A549 (cell line): ENCODE measurements at regions of chr15 and their contacts with region 1.

Region 1: GRCh38 chr15:51776952-51777574 is 25.7 kb downstream of the TMOD2 start:
- DNase-seq: peak; percentile 88
- ATAC-seq: peak; percentile 93 to 97
- H3K4me3 ChIP-seq: no peak overlapping the region
- H3K27ac ChIP-seq: no peak overlapping the region
- H3K4me1 ChIP-seq: peaks cover 13% of the 10 kb centered on the region; the same call in 2 of the 3 replicates
- CTCF ChIP-seq: peak; percentile 92
- EP300 ChIP-seq: no peak
- POLR2A ChIP-seq: no peak
- RAD21 ChIP-seq: peak; percentile 70 to 78

Region 2: GRCh38 chr15:51524376-51524775 is 252.7 kb before region 1 on chr15:
- CTCF ChIA-PET with region 1: interaction called, 11 read pairs
- POLR2A ChIA-PET with region 1: no interaction called
- DNase-seq: no peak
- ATAC-seq: no peak
- H3K4me3 ChIP-seq: no peak overlapping the region
- H3K27ac ChIP-seq: no peak overlapping the region
- H3K4me1 ChIP-seq: no peaks in the 10 kb centered on the region
- CTCF ChIP-seq: no peak
- EP300 ChIP-seq: no peak
- POLR2A ChIP-seq: no peak
- RAD21 ChIP-seq: no peak

Region 3: DNA sequence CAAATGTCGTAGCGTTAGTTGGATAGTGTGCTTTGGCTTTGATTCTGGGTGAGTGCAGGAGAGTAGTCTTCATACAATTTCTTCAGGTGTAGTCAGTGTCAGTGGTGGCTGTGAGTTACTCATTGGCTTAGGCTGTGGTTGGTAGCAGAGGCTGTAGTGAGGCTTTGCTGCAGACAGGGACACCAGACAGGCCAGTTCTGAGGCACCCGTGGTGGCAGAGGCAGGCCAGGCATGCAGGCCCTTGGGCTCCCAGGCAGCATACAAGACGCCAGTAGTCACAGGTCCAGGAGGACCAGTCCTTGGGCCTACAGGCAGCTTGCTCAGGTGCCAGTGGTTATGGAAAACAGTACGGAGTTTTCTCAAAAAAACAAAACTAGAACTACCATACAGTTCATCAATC is 215.8 kb before region 1 on chr15:
- CTCF ChIA-PET with region 1: no interaction called
- POLR2A ChIA-PET with region 1: no interaction called
- DNase-seq: no peak
- ATAC-seq: peak; percentile 48 to 64; a peak in 3 of 6 replicates
- H3K4me3 ChIP-seq: no peak overlapping the region
- H3K27ac ChIP-seq: no peak overlapping the region
- H3K4me1 ChIP-seq: no peaks in the 10 kb centered on the region
- CTCF ChIP-seq: no peak
- EP300 ChIP-seq: no peak
- POLR2A ChIP-seq: 0 out of 2 replicates have a peak, but pooled peaks have one; percentile 14
- RAD21 ChIP-seq: no peak

Region 4: DNA sequence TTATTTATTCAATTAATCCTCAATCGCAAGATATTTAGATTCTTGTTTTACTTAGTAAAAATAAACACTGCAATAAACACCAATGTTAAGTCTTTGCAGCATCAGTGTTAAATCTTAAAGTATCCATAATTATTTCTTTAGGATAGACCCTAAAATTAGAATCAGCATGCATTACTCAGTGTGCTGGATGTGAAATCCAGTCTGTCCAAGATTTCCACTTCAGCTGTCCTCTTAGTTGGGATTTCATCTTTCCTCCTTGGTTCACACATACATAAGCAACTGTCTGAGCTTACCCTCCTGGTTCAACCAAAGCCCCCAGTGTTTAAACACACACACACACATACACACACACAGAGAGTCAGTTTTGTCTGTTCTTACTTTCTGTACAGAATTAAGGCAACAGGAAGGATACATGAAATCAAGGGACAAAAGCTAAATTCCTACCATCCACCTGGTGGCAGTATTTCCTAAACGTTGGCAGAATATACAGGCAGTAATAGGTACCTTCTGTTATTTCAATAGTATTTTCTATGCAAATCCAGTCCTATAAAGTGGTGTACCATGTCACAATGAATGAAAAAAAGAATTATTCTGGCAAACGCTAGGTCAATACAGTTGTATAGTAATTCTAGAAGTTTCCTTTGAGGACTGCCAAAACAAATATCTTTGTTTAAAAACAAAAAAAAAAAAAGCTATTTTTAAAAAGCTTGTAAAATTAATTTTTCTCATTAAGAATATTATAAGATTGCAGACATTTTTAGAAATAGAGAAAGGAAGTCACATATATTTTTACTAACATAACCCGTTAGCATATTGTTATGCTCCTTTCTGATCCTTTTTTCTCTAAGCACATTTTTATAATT is 127.2 kb before region 1 on chr15:
- CTCF ChIA-PET with region 1: interaction called, 597 read pairs
- POLR2A ChIA-PET with region 1: interaction called, 15 read pairs
- DNase-seq: peak; percentile 75 to 85
- ATAC-seq: peak; percentile 96 to 99
- H3K4me3 ChIP-seq: no peak overlapping the region
- H3K27ac ChIP-seq: no peak overlapping the region
- H3K4me1 ChIP-seq: no peaks in the 10 kb centered on the region
- CTCF ChIP-seq: peak; percentile 98
- EP300 ChIP-seq: no peak
- POLR2A ChIP-seq: no peak
- RAD21 ChIP-seq: peak; percentile 97 to 99

Region 5: DNA sequence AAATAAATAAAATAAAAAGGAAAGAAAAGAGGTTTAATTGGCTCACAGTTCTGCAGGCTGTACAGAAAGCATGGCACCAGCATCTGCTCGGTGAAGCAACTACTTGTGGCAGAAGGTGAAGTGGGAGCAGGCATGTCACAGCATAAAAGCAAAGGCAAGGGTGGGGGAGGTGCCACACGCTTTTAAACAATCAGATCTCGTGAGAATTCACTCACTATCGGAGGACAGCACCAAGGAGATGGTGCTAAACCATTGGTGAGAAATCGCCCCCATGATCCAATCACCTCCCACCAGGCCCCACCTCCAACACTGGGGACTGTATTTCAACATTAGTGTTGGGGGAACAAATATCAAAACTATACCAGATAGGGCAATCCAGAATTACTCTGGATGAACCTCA is 80.5 kb before region 1 on chr15:
- CTCF ChIA-PET with region 1: interaction called, 21 read pairs
- POLR2A ChIA-PET with region 1: no interaction called
- DNase-seq: no peak
- ATAC-seq: no peak
- H3K4me3 ChIP-seq: no peak overlapping the region
- H3K27ac ChIP-seq: no peak overlapping the region
- H3K4me1 ChIP-seq: no peaks in the 10 kb centered on the region
- CTCF ChIP-seq: no peak
- EP300 ChIP-seq: no peak
- POLR2A ChIP-seq: no peak
- RAD21 ChIP-seq: no peak

Region 6: GRCh38 chr15:51793521-51794305 is 16.6 kb after region 1 on chr15:
- CTCF ChIA-PET with region 1: interaction called, 37 read pairs
- POLR2A ChIA-PET with region 1: no interaction called
- DNase-seq: no peak
- ATAC-seq: no peak
- H3K4me3 ChIP-seq: no peak overlapping the region
- H3K27ac ChIP-seq: 0 out of 6 replicates have a peak overlapping the region, but pooled peaks of 1 of the 2 experiments have one; percentile 5
- H3K4me1 ChIP-seq: peaks cover 36% of the 10 kb centered on the region
- CTCF ChIP-seq: no peak
- EP300 ChIP-seq: no peak
- POLR2A ChIP-seq: no peak
- RAD21 ChIP-seq: no peak

Region 7: GRCh38 chr15:51853998-51854397 is 76.9 kb after region 1 on chr15:
- CTCF ChIA-PET with region 1: interaction called, 12 read pairs
- POLR2A ChIA-PET with region 1: no interaction called
- DNase-seq: no peak
- ATAC-seq: peak in 1 of 2 experiments; percentile 17; a peak in 2 of 6 replicates
- H3K4me3 ChIP-seq: no peak overlapping the region
- H3K27ac ChIP-seq: peak overlapping the region; percentile 24 to 65; a peak in 4 of 6 replicates
- H3K4me1 ChIP-seq: peaks cover 95% of the 10 kb centered on the region
- CTCF ChIP-seq: no peak
- EP300 ChIP-seq: no peak
- POLR2A ChIP-seq: no peak
- RAD21 ChIP-seq: no peak

Region 8: GRCh38 chr15:52031566-52031965 is 254.5 kb after region 1 on chr15:
- CTCF ChIA-PET with region 1: no interaction called
- POLR2A ChIA-PET with region 1: no interaction called
- DNase-seq: peak in 1 of 2 experiments; percentile 61
- ATAC-seq: peak; percentile 48 to 65; a peak in 2 of 6 replicates
- H3K4me3 ChIP-seq: no peak overlapping the region
- H3K27ac ChIP-seq: no peak overlapping the region
- H3K4me1 ChIP-seq: peaks cover 32% of the 10 kb centered on the region
- CTCF ChIP-seq: no peak
- EP300 ChIP-seq: no peak
- POLR2A ChIP-seq: no peak
- RAD21 ChIP-seq: no peak